ENCODE measurements at regions of chr7 and their contacts with region 1.

Region 1: DNA sequence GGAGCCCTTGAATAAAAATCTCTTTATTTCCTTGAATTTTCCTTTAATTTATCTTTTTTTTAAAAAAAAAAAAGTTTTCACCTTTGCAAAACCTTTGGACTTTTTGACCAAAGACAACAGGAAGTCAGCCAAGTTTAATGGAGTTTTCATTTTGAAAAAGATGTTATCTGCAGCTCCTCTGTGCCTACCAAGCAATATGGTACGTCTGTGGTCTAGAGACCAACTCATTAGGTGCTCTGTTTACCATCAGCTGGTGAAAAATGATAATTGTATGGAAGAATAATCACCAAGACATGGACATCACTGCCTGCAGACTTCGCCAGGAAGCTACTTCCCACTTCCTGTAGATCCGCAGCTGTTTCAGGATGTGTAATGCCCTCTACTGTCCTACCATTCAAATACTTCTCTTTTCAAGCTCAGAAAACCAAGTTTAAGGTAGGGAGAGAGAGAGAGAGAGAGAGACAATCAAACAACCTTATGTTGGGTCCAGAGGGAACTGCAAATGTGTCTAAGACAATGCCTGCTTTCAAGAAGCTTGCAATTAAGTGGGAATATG is 18.7 kb downstream of the PLXNA4 start:
- DNase-seq: no peak
- CTCF ChIP-seq: no peak

Region 2: GRCh38 chr7:132568962-132569361 is 11.4 kb after region 1 on chr7:
- CTCF ChIA-PET with region 1: interaction called, 11 read pairs
- POLR2A ChIA-PET with region 1: no interaction called
- DNase-seq: no peak
- CTCF ChIP-seq: no peak

Region 3: GRCh38 chr7:132590162-132590561 is 32.6 kb after region 1 on chr7:
- CTCF ChIA-PET with region 1: no interaction called
- POLR2A ChIA-PET with region 1: no interaction called
- DNase-seq: no peak
- CTCF ChIP-seq: no peak